Natural killer cell (primary cell): ENCODE measurements at regions of chr16 and their contacts with region 1.

Region 1: DNA sequence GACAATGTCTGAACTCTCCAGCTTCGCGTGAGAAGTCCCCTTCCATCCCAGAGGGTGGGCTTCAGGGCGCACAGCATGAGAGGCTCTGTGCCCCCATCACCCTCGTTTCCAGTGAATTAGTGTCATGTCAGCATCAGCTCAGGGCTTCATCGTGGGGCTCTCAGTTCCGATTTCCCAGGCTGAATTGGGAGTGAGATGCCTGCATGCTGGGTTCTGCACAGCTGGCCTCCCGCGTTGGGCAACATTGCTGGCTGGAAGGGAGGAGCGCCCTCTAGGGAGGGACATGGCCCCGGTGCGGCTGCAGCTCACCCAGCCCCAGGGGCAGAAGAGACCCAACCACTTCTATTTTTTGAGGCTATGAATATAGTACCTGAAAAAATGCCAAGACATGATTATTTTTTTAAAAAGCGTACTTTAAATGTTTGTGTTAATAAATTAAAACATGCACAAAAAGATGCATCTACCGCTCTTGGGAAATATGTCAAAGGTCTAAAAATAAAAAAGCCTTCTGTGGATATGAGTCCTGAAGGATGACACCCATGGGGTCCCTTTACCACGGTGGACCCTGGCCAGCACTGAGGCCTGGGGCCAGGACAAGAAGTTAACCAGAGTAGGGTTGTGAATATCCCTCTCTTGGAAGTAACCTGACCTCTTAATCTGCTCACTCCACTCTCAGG is 10.5 kb upstream of the ITGAD start:
- DNase-seq: peak; percentile 68 to 80
- ATAC-seq: peak; percentile 65 to 85 (median 71)
- H3K4me3 ChIP-seq: no peak overlapping the region
- H3K4me3 Mint-ChIP-seq: peak overlapping the region; percentile 25
- H3K27ac ChIP-seq: no peak overlapping the region
- H3K27ac Mint-ChIP-seq: no peak overlapping the region
- H3K4me1 ChIP-seq: peaks cover 37% of the 10 kb centered on the region
- H3K4me1 Mint-ChIP-seq: peaks cover 23 to 28% of the 10 kb centered on the region in 2 donors
- H3K27me3 ChIP-seq: no peaks in the 10 kb centered on the region
- H3K27me3 Mint-ChIP-seq: peaks cover 0 to 6% of the 10 kb centered on the region in 2 donors
- CTCF ChIP-seq: peak; percentile 90

Region 2: GRCh38 chr16:31354394-31355291 is 28.0 kb before region 1 on chr16 and contains the start of gene ITGAX:
- intact Hi-C with region 1: loop called (anchors 5 kb)
- DNase-seq: peak; percentile 71 to 74
- ATAC-seq: peak; percentile 72 to 87 (median 85)
- H3K4me3 ChIP-seq: peak within 1 kb of the TSS; percentile 59
- H3K4me3 Mint-ChIP-seq: peak within 1 kb of the TSS; percentile 92
- H3K27ac ChIP-seq: peak within 1 kb of the TSS; percentile 85
- H3K27ac Mint-ChIP-seq: peak within 1 kb of the TSS; percentile 89 to 95
- H3K4me1 ChIP-seq: peaks cover 92% of the 10 kb centered on the region
- H3K4me1 Mint-ChIP-seq: peaks cover 66 to 73% of the 10 kb centered on the region in 2 donors
- H3K27me3 ChIP-seq: no peaks in the 10 kb centered on the region
- H3K27me3 Mint-ChIP-seq: no peaks in the 10 kb centered on the region
- CTCF ChIP-seq: no peak
- total RNA-seq, gene ITGAX: 224 to 249 (median 233) TPM

Region 3: GRCh38 chr16:31365131-31365865 is 17.3 kb before region 1 on chr16:
- intact Hi-C with region 1: no loop called
- DNase-seq: peak; percentile 54 to 66
- ATAC-seq: peak; percentile 83 to 92 (median 88)
- H3K4me3 ChIP-seq: no peak overlapping the region
- H3K4me3 Mint-ChIP-seq: peak overlapping the region; percentile 71
- H3K27ac ChIP-seq: peak overlapping the region; percentile 74
- H3K27ac Mint-ChIP-seq: peak overlapping the region; percentile 81 to 83
- H3K4me1 ChIP-seq: peaks cover 70% of the 10 kb centered on the region
- H3K4me1 Mint-ChIP-seq: peaks cover 52 to 68% of the 10 kb centered on the region in 2 donors
- H3K27me3 ChIP-seq: no peaks in the 10 kb centered on the region
- H3K27me3 Mint-ChIP-seq: peaks cover 0 to 3% of the 10 kb centered on the region in 2 donors
- CTCF ChIP-seq: no peak